Activated CD8-positive, alpha-beta T cell treated with anti-CD3 and anti-CD28 coated beads, Interleukin-2, amount 10 ng/mL, durations not matched to agents 7 days and 5 days (primary cell): ENCODE measurements at regions of chr16 and their contacts with region 1.

Region 1: GRCh38 chr16:23796941-23797340 is 38.8 kb upstream of the PRKCB start:
- DNase-seq: no peak
- ATAC-seq: no peak
- H3K4me3 Mint-ChIP-seq: no peak overlapping the region
- H3K27ac Mint-ChIP-seq: no peak overlapping the region
- H3K4me1 Mint-ChIP-seq: peaks cover 7% of the 10 kb centered on the region
- H3K27me3 Mint-ChIP-seq: no peaks in the 10 kb centered on the region

Region 2: DNA sequence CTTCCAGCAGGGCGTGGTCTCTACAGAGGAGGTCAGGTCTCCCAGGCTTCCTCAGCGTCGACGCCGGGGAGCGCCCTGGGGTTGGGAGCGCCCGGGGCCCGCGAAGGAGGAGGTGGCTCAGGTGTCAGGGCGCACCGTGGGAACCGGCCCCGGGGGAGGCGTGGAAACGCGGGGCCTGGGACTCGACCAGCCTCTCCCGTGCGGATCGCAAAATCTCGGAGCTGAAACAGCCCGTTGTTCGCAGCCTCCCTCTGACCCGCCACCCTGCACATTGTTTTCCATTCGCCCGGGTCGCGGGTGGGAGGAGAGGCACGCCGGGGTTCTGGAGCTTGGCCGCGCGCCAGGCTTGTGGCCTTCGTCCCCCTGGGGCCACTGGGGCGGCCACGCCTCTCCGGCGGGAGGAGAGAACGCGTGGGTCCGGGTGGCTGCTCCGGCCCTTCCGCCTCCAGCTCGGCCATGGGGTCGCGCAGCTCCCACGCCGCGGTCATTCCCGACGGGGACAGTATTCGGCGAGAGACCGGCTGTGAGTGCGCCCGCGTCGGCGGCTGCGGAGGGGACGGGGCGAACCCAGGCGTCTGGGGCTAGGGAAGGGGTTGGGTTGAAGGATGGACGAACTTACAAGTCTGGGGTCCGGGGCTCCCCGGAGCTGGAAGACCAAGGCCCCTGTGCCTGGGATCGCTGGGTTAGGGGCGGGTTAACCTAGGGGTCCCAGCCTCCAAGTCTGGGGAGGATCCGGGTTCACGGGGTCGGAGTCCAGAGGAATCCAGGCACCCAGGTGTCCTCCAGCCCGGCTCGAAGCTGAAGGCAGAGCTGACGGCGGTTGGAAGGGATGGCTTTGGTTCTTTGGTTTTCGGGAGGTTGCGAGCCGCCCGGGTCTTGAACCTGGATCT is 42.1 kb before region 1 on chr16 and contains the start of gene CHP2:
- CTCF ChIA-PET with region 1: no interaction called
- POLR2A ChIA-PET with region 1: no interaction called
- DNase-seq: no peak
- ATAC-seq: no peak
- H3K4me3 Mint-ChIP-seq: no peak within 1 kb of the TSS
- H3K27ac Mint-ChIP-seq: no peak within 1 kb of the TSS
- H3K4me1 Mint-ChIP-seq: no peaks in the 10 kb centered on the region
- H3K27me3 Mint-ChIP-seq: peaks cover 59% of the 10 kb centered on the region
- total RNA-seq, gene CHP2: not detected

Region 3: GRCh38 chr16:23934610-23935236 is 137.8 kb after region 1 on chr16:
- CTCF ChIA-PET with region 1: no interaction called
- POLR2A ChIA-PET with region 1: no interaction called
- DNase-seq: no peak
- ATAC-seq: no peak
- H3K4me3 Mint-ChIP-seq: no peak overlapping the region
- H3K27ac Mint-ChIP-seq: no peak overlapping the region
- H3K4me1 Mint-ChIP-seq: peaks cover 9% of the 10 kb centered on the region
- H3K27me3 Mint-ChIP-seq: no peaks in the 10 kb centered on the region

Region 4: GRCh38 chr16:24036614-24037013 is 239.7 kb after region 1 on chr16:
- CTCF ChIA-PET with region 1: interaction called, 126 read pairs
- POLR2A ChIA-PET with region 1: no interaction called
- DNase-seq: peak; percentile 47
- ATAC-seq: peak; percentile 41
- H3K4me3 Mint-ChIP-seq: peak overlapping the region; percentile 26
- H3K27ac Mint-ChIP-seq: peak overlapping the region; percentile 22
- H3K4me1 Mint-ChIP-seq: peaks cover 56% of the 10 kb centered on the region
- H3K27me3 Mint-ChIP-seq: no peaks in the 10 kb centered on the region